Right ventricle myocardium superior (tissue), 1 donor: ENCODE measurements at regions of chr17 and their contacts with region 1.

Region 1: GRCh38 chr17:78289802-78290363 is 58.5 kb downstream of the TMEM235 start:
- DNase-seq: peak; percentile 85
- ATAC-seq: peak; percentile 93

Region 2: DNA sequence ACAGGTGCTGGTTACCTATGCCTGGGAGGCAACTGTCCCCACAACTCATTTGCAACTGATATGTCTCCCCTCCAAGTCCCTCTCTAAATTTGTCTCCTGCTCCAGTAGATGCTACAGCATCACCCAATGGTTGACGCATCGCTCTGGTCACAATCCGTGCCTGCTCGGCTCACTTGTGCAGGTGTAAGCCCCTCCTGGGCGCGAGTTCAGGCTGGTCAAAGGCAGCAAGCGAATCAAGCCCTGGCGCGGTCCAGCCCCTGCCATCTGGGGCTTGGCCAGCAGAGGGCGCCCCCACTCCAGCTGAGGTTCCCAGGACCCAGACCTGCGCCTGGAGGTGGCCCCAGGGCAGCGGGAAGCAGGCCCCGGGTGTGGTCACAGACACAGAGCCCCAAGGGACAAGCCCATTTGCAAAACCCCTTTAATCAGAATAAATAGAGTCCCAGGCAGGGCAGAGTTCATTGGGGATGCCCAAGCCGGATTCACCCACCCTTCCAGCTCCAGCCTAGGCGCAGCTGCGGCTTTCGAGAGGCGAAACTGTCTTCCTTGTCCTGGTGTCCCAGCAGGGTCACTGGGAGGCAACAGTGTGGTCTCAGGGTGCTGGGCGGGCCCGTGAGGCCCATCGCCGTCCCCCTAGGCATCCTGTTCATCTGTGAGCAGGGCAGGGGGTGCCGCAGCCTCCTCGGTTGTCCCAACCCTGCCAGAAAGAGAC is 177.2 kb before region 1 on chr17:
- intact Hi-C with region 1: no loop called
- DNase-seq: peak; percentile 91
- ATAC-seq: peak; percentile 68

Region 3: GRCh38 chr17:78360371-78361224 is 70.7 kb after region 1 on chr17:
- intact Hi-C with region 1: loop called (anchors 5 kb)
- DNase-seq: peak; percentile 96
- ATAC-seq: peak; percentile 81

Region 4: DNA sequence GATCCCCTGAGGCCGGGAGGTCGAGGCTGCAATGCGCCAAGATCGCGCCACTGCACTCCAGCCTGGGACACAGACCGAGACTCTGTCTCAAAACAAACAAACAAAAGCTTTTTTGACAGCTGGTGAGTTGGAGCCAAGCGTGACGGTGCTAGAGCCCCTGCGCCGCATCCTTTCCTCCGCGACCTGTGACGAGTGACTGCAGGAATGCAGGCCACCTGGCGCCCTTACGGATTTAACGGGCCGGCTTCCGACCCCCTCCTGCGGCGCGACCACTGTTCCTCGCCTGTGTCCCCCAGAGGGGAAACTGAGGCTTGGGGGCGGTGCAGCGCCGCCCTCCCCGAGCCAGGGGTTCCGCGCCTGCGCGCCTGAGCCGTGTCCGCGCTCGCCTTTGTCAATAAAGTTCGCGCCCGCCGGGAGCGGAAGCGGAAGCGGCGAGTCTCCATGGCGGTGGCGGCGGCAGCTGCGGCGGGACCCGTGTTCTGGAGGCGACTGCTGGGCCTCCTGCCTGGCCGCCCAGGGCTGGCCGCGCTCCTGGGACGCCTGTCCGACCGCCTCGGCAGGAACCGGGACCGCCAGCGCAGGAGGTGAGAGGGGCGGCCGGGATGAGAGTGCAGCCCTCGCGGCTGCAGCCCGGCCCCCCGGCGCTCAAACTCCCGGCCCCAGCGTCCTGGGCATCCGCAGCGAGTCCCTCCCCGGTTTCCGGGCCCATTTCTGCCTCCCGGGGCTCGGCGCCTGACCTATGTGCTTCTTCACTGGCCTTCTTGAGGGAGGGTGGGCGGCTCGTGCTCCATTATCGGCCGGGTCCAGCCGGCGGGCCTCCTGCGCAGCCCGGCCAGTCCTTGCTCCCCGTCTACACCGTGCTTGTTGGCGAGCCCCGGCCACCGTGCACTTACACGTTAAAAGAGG is 88.6 kb after region 1 on chr17 and contains the start of gene PGS1:
- intact Hi-C with region 1: no loop called
- DNase-seq: peak; percentile 91
- ATAC-seq: peak; percentile 95
- total RNA-seq, gene PGS1: 18.1 TPM

Region 5: DNA sequence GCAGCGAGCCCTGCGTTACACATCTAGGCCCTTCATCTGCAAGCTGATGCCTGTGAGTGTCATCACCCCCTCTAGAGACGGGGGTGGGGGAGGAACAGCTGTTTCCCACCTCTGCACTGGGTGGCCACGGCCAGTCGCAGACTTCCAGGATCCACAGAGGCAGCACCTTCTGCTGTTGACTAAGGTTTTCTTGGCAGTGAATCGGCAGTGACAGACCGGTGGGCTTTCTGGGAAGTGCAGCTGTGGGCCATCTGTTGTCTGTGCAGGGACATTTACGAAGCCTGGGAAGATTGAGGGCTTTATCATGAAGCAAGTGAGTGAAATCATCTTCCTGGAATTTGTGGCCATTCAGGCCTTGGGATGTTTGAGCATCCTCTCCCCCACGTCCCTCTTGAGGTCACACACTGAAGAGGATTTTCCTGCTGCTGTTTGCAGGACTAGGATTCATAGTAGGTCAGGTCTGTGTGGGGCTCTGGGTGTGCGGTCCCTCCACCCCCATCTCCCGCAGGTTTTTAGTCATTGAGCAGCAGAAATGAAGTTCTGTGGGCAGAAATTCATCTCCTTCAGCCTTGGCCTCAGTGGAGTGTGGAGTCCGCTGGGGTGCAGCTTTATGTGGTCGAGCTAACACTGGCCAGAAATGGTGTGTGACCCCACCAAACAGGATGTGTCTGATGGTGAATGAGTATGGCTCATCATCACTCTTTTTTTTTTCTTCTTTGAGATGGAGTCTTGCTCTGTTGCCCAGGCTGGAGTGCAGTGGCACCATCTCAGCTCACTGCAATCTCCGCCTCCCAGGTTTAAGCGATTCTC is 100.6 kb after region 1 on chr17:
- intact Hi-C with region 1: no loop called
- DNase-seq: no peak
- ATAC-seq: no peak